ENCODE measurements at regions of chr7 and their contacts with region 1.

Region 1: DNA sequence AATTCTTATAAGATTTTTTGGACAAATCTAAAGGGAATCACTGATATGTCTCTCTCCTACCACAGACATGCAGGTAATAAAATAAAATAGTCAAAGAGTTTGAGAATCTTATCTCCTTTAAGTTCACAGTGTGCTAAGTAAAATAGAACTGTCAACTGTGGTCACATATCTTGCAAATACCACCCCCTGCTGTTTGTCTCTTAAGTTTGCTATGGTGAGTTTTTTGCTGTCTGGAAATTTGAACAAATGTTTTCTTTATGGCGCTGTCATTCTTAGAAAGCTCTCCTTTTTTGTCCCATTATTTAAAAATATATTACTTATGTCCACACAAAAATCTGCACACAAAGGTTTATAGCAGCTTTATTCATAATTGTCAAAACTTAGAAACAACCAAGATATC is 19.6 kb downstream of the GIMAP5 start:
- DNase-seq: no peak
- H3K4me3 ChIP-seq: no peak overlapping the region
- H3K27ac ChIP-seq: no peak overlapping the region
- H3K4me1 ChIP-seq: no peaks in the 10 kb centered on the region
- H3K27me3 ChIP-seq: no peaks in the 10 kb centered on the region
- CTCF ChIP-seq: peak; percentile 33

Region 2: DNA sequence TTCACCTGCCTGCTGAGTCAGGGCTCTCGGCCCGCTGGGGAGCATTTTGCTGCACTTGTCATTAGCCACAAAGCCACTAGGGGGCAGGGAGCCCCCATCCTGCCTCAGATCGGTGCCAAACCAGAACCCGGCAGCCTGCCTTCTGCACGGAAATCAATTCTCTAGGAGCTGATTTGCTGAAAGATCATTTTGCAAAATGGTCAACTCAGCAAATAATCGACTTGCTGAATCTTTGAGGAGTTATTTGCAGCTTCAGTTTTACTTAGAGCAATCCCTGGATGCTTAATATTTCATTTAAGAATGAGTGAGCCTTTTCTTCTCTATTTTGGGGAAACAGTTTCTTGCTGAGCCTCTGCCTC is 308.1 kb before region 1 on chr7:
- intact Hi-C with region 1: loop called (anchors 5 kb)
- DNase-seq: peak; percentile 85
- H3K4me3 ChIP-seq: no peak overlapping the region
- H3K27ac ChIP-seq: peak overlapping the region; percentile 30
- H3K4me1 ChIP-seq: no peaks in the 10 kb centered on the region
- H3K27me3 ChIP-seq: no peaks in the 10 kb centered on the region
- CTCF ChIP-seq: peak; percentile 90

Region 3: GRCh38 chr7:151198945-151199848 is 442.3 kb after region 1 on chr7:
- intact Hi-C with region 1: no loop called
- DNase-seq: no peak
- H3K4me3 ChIP-seq: no peak overlapping the region
- H3K27ac ChIP-seq: no peak overlapping the region
- H3K4me1 ChIP-seq: no peaks in the 10 kb centered on the region
- H3K27me3 ChIP-seq: no peaks in the 10 kb centered on the region
- CTCF ChIP-seq: no peak